CD4-positive, alpha-beta memory T cell (primary cell): ENCODE measurements at regions of chr19 and their contacts with region 1.

Region 1: GRCh38 chr19:18460900-18461299 is 23.0 kb upstream of the ISYNA1 start:
- DNase-seq: no peak
- H3K4me3 ChIP-seq: no peak overlapping the region
- H3K4me3 Mint-ChIP-seq: no peak overlapping the region
- H3K27ac ChIP-seq: no peak overlapping the region
- H3K27ac Mint-ChIP-seq: no peak overlapping the region
- H3K4me1 ChIP-seq: no peaks in the 10 kb centered on the region
- H3K4me1 Mint-ChIP-seq: peaks cover 5 to 17% (median 7%) of the 10 kb centered on the region in 4 donors
- H3K27me3 ChIP-seq: no peaks in the 10 kb centered on the region
- H3K27me3 Mint-ChIP-seq: no peaks in the 10 kb centered on the region

Region 2: GRCh38 chr19:18436671-18437490 is 24.0 kb before region 1 on chr19:
- CTCF ChIA-PET with region 1: interaction called, 16 read pairs
- POLR2A ChIA-PET with region 1: interaction called, 3 read pairs
- intact Hi-C with region 1: no loop called
- DNase-seq: peak; percentile 74 to 85 (median 77)
- H3K4me3 ChIP-seq: peak overlapping the region in 1 of 2 donors; percentile 55
- H3K4me3 Mint-ChIP-seq: peak overlapping the region; percentile 74 to 87 (median 83)
- H3K27ac ChIP-seq: peak overlapping the region; percentile 26
- H3K27ac Mint-ChIP-seq: peak overlapping the region; percentile 70 to 91 (median 78)
- H3K4me1 ChIP-seq: peaks cover 20% of the 10 kb centered on the region
- H3K4me1 Mint-ChIP-seq: peaks cover 12 to 51% (median 25%) of the 10 kb centered on the region in 4 donors
- H3K27me3 ChIP-seq: no peaks in the 10 kb centered on the region
- H3K27me3 Mint-ChIP-seq: no peaks in the 10 kb centered on the region